Dendritic cell treated with granulocyte-macrophage colony-stimulating factor and Interleukin-4, amounts not matched to agents 40 ng/mL and 50 ng/mL, for 4 days (primary cell): ENCODE measurements at regions of chr21 and their contacts with region 1.

Region 1: DNA sequence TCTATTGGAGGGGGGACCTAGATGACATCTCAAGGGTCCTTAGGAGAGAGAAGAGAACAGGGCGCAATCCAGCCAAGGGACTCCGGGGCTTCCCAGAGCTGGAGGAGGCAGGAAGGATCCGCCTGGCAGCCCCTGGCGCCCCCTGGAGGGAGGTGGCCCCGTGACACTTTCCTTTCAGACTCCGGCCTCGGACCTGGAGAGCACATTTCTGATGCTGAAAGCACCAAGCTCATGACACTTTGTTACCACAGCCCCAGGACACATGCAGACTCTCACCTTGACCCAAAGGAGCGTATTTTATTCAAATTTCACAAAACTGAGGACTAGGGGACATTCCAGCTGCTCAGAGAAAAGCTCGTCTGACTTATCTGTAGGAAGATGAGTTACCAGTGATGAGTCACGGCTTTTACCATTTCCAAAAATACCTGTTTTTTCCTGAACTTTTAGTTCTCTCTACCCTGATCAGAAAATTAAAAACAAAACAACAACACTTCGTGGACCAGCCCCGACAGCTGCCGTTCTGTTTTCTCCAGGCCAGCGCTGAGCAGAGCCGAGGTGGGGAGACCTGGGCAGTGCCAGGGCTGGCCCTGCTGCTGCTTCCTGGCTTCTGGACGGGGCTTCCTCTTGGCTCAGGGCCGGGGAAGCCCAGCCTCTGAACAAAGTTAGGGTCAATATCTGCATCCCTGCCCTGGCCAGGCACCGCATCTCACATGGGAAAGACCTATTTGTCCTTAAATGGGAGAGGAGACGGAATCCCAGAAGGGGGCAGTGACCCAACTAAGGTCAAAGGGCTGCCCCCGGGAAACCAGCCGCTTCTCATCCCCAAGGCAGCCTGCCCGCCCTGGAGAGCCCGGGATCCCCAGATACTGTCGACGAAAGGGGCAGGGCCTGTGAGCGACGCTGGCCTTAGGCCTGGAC is 21.6 kb upstream of the POFUT2 start:
- H3K4me3 Mint-ChIP-seq: peak overlapping the region; percentile 0
- H3K27ac Mint-ChIP-seq: no peak overlapping the region
- H3K4me1 Mint-ChIP-seq: peaks cover 11% of the 10 kb centered on the region
- H3K27me3 Mint-ChIP-seq: peaks cover 16% of the 10 kb centered on the region

Region 2: GRCh38 chr21:45439161-45439872 is 130.0 kb after region 1 on chr21:
- intact Hi-C with region 1: loop called (anchors 5 kb)
- H3K4me3 Mint-ChIP-seq: peak overlapping the region; percentile 61
- H3K27ac Mint-ChIP-seq: peak overlapping the region; percentile 55
- H3K4me1 Mint-ChIP-seq: no peaks in the 10 kb centered on the region
- H3K27me3 Mint-ChIP-seq: peaks cover 27% of the 10 kb centered on the region

Region 3: DNA sequence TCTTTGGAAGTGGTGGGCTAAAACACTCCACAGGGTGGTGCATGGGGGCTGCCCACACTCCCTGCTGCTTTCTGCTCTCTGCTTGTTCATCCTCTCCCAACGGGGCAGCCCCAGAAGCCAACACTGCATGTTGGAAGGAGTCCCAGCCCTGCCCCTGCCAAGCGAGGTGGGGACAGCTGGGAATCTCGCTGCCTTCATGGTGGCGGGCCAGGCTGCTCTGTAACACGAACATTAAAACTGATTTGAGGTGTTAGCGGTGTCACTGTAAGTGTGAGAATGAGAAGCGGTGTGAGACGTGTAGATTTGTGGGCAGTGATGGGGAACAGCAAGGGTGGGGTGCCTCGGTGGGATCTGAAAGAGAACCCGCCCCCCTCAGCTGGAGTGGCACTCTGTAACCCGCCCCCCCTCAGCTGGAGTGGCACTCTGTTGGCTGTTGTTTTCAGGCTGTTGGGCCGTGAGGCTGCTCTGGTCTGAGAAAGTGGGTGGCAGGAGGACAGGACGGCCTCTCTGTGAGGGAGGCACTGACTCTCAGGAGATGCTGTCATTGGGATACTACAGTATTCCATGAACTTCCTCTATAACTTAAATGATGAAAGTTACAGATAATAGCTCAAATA is 415.1 kb after region 1 on chr21:
- intact Hi-C with region 1: no loop called
- H3K4me3 Mint-ChIP-seq: no peak overlapping the region
- H3K27ac Mint-ChIP-seq: no peak overlapping the region
- H3K4me1 Mint-ChIP-seq: no peaks in the 10 kb centered on the region
- H3K27me3 Mint-ChIP-seq: no peaks in the 10 kb centered on the region